PC-3 (cell line): ENCODE measurements at regions of chr12 and their contacts with region 1.

Region 1: DNA sequence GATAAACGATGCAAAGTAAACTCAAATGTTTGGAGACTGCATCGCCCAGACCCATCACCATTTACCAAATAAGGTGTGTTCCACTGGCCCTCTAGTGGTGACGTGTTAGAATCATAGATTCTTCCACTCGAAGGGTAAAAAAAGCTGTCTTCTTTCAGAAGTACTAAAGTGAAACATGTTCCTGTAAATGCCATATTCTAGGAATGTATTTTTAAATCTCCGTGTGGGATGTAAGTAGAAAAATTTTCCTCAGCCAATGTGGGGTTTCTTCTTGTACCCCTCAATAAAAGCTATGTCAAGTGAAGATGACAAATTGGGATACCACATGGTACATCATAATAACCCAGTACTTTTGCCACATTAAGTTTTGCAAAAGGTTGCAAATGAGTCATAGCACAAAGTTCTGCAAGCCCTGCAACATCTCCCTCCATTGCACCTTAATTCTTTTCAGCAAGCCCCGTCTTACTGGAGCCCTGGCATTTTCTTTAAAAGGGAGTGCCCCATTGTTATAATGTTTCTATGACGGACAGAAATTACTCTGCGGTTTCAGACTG is 100.8 kb downstream of the CCER1 start:
- DNase-seq: peak; percentile 74
- ATAC-seq: peak; percentile 77
- H3K4me3 ChIP-seq: no peak overlapping the region
- H3K27ac ChIP-seq: no peak overlapping the region
- H3K4me1 ChIP-seq: peaks cover 15% of the 10 kb centered on the region
- H3K27me3 ChIP-seq: no peaks in the 10 kb centered on the region
- CTCF ChIP-seq: peak; percentile 89

Region 2: DNA sequence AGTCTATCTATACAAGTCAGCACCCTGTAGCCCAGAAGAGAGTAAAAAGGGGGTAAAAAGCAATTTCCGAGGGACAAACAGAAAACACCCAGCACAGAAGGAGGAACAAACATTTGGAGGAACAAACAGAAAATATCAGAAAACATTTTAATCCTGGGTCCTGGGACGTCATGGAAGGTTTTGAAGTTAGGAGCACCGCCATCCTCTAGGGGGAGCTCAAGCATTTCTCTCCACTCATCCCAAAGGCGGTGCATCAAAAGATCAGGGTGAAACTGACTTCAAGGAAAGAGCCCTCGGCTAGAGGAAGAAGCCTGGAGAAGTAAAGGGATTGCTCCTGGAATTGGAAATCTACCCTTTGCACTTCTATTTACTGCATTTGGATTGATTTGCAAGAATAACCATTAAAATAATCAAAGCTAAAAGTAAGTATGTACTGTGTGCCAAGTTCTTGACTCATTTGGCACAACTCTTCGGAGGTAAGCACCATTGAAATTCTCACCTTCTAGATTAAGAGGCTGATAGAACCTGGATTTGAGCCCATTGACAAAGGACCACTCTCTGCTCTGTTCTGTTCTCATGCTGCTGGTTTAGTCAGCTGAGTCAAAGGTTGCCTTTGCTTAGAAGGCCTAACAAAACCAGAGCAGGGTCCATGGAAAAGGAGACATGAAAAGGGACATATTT is 1311.2 kb before region 1 on chr12:
- CTCF ChIA-PET with region 1: no interaction called
- POLR2A ChIA-PET with region 1: no interaction called
- intact Hi-C with region 1: loop called (anchors 5 kb)
- DNase-seq: peak; percentile 91
- ATAC-seq: peak; percentile 94
- H3K4me3 ChIP-seq: no peak overlapping the region
- H3K27ac ChIP-seq: peak overlapping the region; percentile 7
- H3K4me1 ChIP-seq: peaks cover 6% of the 10 kb centered on the region
- H3K27me3 ChIP-seq: no peaks in the 10 kb centered on the region
- CTCF ChIP-seq: peak; percentile 96

Region 3: DNA sequence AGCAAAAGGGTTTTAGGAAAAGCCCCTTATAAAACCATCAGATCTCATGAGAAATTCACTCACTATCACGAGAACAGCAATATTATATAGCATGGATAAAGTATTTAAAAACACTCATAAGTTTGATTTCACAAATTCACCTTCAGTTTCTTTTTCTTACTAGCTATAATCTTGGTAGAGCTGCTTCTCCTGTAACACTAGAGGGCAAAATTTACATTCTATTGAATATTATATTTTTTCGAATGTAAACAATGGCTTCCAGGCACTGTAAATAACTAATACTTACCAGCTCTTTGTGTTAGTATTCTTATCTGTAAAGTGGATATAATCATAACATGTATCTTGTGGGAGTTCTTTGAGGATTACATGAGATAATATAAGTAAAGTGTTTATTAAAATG is 158.8 kb before region 1 on chr12:
- CTCF ChIA-PET with region 1: interaction called, 7 read pairs
- POLR2A ChIA-PET with region 1: no interaction called
- intact Hi-C with region 1: loop called (anchors 1 kb)
- DNase-seq: peak; percentile 56
- ATAC-seq: peak; percentile 55
- H3K4me3 ChIP-seq: peak overlapping the region; percentile 3; the same call in 1 of the 2 replicates
- H3K27ac ChIP-seq: no peak overlapping the region
- H3K4me1 ChIP-seq: no peaks in the 10 kb centered on the region
- H3K27me3 ChIP-seq: no peaks in the 10 kb centered on the region
- CTCF ChIP-seq: peak; percentile 79

Region 4: DNA sequence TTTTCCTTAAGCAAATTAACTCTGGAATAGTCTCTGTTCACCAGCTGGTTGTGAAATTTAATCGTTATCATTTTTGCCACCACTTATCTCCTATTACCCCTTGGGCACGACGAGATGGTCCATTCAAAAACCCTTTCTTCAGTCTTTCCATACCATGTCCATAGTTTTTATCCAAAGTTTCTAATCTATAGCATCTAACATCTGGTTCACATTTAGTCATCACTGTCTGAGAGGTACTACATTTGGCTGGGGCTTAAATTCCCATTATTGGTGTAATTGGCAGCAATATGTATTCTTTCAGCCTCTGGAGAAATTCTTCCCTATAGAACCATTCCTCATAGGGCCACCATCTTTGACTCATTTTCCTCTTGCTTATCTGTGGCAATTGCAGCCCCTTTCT is 62.8 kb before region 1 on chr12:
- CTCF ChIA-PET with region 1: no interaction called
- POLR2A ChIA-PET with region 1: no interaction called
- intact Hi-C with region 1: loop called (anchors 1 kb)
- DNase-seq: no peak
- ATAC-seq: no peak
- H3K4me3 ChIP-seq: no peak overlapping the region
- H3K27ac ChIP-seq: no peak overlapping the region
- H3K4me1 ChIP-seq: no peaks in the 10 kb centered on the region
- H3K27me3 ChIP-seq: no peaks in the 10 kb centered on the region
- CTCF ChIP-seq: no peak

Region 5: GRCh38 chr12:90816353-90817089 is 37.7 kb before region 1 on chr12:
- CTCF ChIA-PET with region 1: no interaction called
- POLR2A ChIA-PET with region 1: no interaction called
- intact Hi-C with region 1: loop called (anchors 5 kb)
- DNase-seq: peak; percentile 88
- ATAC-seq: peak; percentile 94
- H3K4me3 ChIP-seq: no peak overlapping the region
- H3K27ac ChIP-seq: peak overlapping the region; percentile 83
- H3K4me1 ChIP-seq: peaks cover 28% of the 10 kb centered on the region
- H3K27me3 ChIP-seq: no peaks in the 10 kb centered on the region
- CTCF ChIP-seq: no peak

Region 6: GRCh38 chr12:90909069-90909770 is 55.0 kb after region 1 on chr12:
- CTCF ChIA-PET with region 1: no interaction called
- POLR2A ChIA-PET with region 1: no interaction called
- intact Hi-C with region 1: loop called (anchors 5 kb)
- DNase-seq: peak; percentile 75
- ATAC-seq: peak; percentile 58
- H3K4me3 ChIP-seq: no peak overlapping the region
- H3K27ac ChIP-seq: no peak overlapping the region
- H3K4me1 ChIP-seq: 0 out of 2 replicates have a peak, but pooled peaks cover 10% of the 10 kb centered on the region
- H3K27me3 ChIP-seq: no peaks in the 10 kb centered on the region
- CTCF ChIP-seq: peak; percentile 92